Mammary epithelial cell (primary cell): ENCODE measurements at regions of chr17 and their contacts with region 1.

Region 1: DNA sequence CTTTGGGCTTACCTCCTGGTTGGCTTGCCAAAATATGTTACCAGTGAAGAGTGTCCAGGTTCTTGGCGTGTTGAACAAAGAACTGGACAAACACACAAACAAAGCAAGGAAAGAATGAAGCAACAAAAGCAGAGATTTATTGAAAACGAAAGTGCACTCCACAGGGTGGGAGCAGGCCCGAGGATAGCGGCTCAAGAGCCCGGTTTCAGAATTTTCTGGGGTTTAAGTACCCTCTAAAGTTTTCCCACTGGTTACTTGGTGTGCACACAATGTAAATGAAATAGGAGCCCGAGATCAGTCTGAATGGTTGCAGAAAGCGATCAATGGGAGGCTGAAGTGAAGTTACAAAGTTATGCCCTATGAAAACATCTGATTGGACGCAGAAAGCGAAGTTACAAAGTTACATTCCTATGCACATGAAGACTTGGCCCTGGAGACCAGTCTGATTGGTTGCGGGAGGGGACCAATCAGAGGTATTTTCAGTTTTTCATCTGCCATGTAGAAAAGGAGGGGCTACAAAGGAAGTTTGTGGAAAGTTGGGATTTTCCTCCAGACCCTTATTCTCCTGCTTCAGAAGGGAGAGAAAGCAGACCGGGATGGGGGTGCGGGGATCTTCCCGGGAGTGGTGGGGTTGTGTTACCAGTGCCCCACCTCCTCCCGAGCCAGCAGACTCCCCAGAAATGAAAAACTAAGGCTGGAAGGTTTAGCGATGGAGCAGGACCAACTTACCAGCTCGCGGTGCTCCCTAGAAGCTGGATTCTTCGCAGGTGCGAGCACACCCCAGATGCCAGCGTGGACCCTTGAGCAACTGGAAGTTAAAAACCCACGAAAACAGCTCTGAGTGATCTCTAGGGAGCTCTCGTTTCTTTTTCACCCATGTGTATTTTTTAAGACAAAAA is at the start of gene SLFN12:
- DNase-seq: peak; percentile 50
- H3K4me3 ChIP-seq: peak within 1 kb of the TSS; percentile 48 to 81 (median 55)
- H3K27ac ChIP-seq: peak within 1 kb of the TSS; percentile 52
- H3K4me1 ChIP-seq: peaks cover 18% of the 10 kb centered on the region
- H3K27me3 ChIP-seq: no peaks in the 10 kb centered on the region
- CTCF ChIP-seq: no peak
- total RNA-seq, gene SLFN12: 10.8 to 22.2 TPM

Region 2: GRCh38 chr17:35486920-35487732 is 54.7 kb after region 1 on chr17:
- CTCF ChIA-PET with region 1: no interaction called
- dilution Hi-C with region 1: no loop called
- in situ Hi-C with region 1: no loop called
- intact Hi-C with region 1: loop called (anchors 1 kb)
- DNase-seq: peak; percentile 73
- H3K4me3 ChIP-seq: peak overlapping the region; percentile 42 to 62 (median 50)
- H3K27ac ChIP-seq: peak overlapping the region; percentile 24
- H3K4me1 ChIP-seq: peaks cover 12% of the 10 kb centered on the region
- H3K27me3 ChIP-seq: peaks cover 18% of the 10 kb centered on the region
- CTCF ChIP-seq: no peak

Region 3: GRCh38 chr17:35519439-35519838 is 87.0 kb after region 1 on chr17:
- CTCF ChIA-PET with region 1: no interaction called
- dilution Hi-C with region 1: no loop called
- in situ Hi-C with region 1: no loop called
- intact Hi-C with region 1: no loop called
- DNase-seq: peak; percentile 19
- H3K4me3 ChIP-seq: no peak overlapping the region
- H3K27ac ChIP-seq: no peak overlapping the region
- H3K4me1 ChIP-seq: peaks cover 12% of the 10 kb centered on the region
- H3K27me3 ChIP-seq: no peaks in the 10 kb centered on the region
- CTCF ChIP-seq: no peak

Region 4: GRCh38 chr17:35537601-35538141 is 105.2 kb after region 1 on chr17 and contains the start of gene SLFN12L:
- CTCF ChIA-PET with region 1: no interaction called
- dilution Hi-C with region 1: no loop called
- in situ Hi-C with region 1: no loop called
- intact Hi-C with region 1: loop called (anchors 1 kb)
- DNase-seq: no peak
- H3K4me3 ChIP-seq: no peak within 1 kb of the TSS
- H3K27ac ChIP-seq: no peak within 1 kb of the TSS
- H3K4me1 ChIP-seq: no peaks in the 10 kb centered on the region
- H3K27me3 ChIP-seq: peaks cover 2% of the 10 kb centered on the region
- CTCF ChIP-seq: no peak
- total RNA-seq, gene SLFN12L: 0.12 to 0.17 TPM